HEK293 (cell line): ENCODE measurements at regions of chr12 and their contacts with region 1.

Region 1: GRCh38 chr12:10140001-10140400 is 10.0 kb upstream of the CLEC7A start:
- H3K4me3 ChIP-seq: no peak overlapping the region
- H3K27ac ChIP-seq: no peak overlapping the region
- H3K4me1 ChIP-seq: no peaks in the 10 kb centered on the region
- CTCF ChIP-seq: no peak; the same call in 1 of the 2 replicates

Region 2: DNA sequence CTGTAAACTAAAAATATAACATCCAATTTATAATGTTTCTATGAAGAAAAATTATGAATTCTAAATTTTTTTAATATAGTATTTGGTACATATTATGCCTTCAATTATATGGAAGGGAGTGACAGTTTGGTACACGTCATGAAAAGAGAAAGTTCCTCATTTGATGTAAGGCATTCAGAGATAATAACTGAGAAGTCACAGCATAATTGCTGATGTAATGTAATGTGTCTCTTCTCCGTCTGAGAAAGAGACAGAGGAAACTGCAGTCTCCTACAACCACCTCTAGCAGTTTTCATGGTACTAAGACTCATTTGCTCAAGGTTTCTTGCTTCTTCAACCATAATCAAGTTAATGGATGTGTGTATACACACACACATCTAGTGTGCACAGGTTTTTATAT is 377.0 kb before region 1 on chr12:
- CTCF ChIA-PET with region 1: no interaction called
- POLR2A ChIA-PET with region 1: no interaction called
- H3K4me3 ChIP-seq: no peak overlapping the region
- H3K27ac ChIP-seq: no peak overlapping the region
- H3K4me1 ChIP-seq: no peaks in the 10 kb centered on the region
- CTCF ChIP-seq: no peak

Region 3: DNA sequence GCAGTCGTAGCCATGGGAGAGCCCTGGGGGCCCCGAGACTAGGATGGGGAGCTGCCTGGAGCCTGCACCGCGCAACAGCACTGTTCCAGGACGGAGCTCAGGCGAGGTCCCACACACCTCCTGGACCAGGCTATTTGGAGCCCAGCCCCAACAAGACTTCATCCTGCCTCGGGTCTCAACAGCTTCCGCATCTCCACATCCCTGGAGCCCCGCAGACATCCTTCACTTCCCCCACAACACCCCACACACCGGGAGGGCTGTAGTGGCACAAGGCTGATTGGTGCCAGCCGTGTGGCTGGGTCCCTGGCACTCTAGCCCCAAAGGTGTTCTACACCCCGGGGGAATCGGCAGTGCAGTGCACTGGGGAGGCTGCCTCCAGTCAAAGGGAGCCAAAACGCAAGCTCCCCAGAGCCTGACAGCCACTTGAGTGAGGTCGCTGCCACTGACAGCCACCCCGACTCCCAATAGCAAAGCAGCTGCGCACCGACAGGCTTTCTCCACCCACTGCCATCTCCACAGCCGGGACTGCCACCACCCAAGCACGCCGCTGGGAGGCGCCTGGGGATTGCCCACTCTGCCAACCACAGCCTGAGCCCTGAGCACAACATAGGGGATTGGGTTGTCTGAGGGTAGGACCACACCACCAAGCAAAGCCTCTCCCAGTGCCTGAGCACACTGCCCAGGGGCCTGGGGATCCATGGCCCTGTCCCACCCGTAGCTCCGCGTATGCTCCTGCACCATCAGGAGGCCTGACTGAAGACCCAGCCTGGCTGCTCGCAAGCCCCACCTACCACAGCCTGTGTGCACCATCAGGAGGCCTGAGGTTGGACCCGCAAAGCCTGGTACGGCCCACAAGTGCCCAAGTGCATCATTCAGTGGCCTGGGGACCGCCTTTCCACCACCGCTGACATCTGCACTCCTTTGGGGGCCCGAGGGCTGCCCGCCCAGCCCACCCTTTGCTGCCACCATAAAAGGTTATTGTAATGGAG is 325.9 kb before region 1 on chr12:
- CTCF ChIA-PET with region 1: interaction called, 10 read pairs
- POLR2A ChIA-PET with region 1: no interaction called
- H3K4me3 ChIP-seq: peak overlapping the region; percentile 28
- H3K27ac ChIP-seq: no peak overlapping the region
- H3K4me1 ChIP-seq: no peaks in the 10 kb centered on the region
- CTCF ChIP-seq: peak; percentile 91

Region 4: GRCh38 chr12:10012630-10013330 is 127.2 kb before region 1 on chr12:
- CTCF ChIA-PET with region 1: interaction called, 16 read pairs
- POLR2A ChIA-PET with region 1: no interaction called
- H3K4me3 ChIP-seq: no peak overlapping the region
- H3K27ac ChIP-seq: no peak overlapping the region
- H3K4me1 ChIP-seq: no peaks in the 10 kb centered on the region
- CTCF ChIP-seq: no peak

Region 5: GRCh38 chr12:10033783-10034545 is 106.0 kb before region 1 on chr12:
- CTCF ChIA-PET with region 1: interaction called, 11 read pairs
- POLR2A ChIA-PET with region 1: no interaction called
- H3K4me3 ChIP-seq: no peak overlapping the region
- H3K27ac ChIP-seq: no peak overlapping the region
- H3K4me1 ChIP-seq: no peaks in the 10 kb centered on the region
- CTCF ChIP-seq: no peak

Region 6: DNA sequence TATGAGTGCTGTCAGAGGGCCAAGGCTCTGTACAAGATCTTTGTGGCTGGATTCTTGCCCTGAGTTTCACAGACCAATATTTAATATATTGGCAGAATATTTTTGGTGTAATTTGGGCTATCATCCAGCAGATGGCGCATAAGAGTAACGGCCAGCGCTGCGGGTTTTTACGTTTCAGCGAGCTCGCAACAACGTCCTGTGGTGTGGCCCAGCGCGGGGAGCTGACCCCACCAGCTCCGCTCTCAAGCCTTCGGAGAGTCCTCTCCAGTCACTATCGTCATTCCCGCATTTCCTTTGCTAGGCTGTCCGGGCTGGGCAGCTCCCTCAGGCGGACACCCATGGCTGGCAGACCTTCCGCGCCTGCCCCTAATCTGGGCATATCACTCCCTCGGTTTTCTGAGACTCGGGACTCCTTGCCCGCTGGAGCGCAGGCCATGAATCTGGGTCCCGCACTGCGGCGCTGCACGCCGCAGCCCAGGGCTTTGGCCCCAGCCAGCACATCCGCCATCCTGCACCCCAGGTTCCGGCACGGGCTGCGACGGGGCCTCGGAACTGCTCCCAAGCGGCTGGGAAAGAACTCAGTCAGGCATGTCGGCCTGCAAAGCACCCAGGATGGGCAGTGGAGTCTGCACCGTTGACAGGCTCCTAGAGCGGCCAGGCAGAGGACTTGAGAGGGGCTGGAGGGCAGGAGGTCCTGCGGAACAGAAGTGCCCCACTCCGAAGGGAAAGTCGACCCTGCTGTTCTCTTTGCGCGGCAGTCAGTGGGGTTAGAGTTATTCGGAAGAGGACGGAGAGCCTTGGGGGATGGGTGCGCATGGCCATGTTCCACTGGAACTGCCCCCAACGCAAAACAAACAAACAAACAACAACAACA is 13.5 kb after region 1 on chr12:
- CTCF ChIA-PET with region 1: interaction called, 13 read pairs
- POLR2A ChIA-PET with region 1: no interaction called
- H3K4me3 ChIP-seq: peak overlapping the region; percentile 39
- H3K27ac ChIP-seq: peak overlapping the region; percentile 3; the same call in 1 of the 2 replicates
- H3K4me1 ChIP-seq: no peaks in the 10 kb centered on the region
- CTCF ChIP-seq: peak; percentile 76

Region 7: DNA sequence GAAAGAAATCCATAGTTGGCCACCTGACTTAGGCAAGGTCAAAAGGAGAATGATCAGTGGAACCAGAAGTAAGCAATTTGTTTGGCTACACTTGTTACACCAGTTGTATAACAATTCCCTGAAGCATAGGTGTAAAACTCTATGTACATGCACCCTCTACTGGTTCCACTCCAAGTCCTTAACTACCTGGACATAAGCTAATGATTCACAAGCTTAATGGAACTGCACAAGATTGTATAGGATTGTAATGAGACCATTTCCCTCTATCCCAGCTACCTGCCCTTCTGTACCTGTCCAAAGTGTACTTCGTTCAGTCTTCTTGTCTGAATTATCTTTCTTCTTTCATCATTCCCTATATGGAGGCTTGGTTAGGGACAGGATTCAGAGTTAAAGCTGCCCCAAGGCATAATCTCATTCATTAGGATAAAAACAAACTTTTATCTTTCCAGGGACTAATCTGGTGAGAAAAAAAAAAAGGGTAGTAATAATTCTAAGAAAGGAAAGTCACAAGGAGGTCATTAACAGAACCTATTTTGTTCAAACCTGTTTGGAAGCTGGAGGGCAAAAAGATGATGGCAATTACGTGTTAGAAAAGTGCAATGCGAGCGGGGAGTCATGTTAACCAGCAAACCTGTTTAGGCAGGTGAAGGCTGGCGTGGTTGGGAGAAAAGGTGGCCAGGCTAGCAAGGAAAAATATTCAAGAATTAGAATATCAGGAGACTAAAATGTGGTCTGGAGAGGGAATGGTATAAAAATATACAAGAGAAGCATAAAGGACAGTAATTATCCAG is 36.0 kb after region 1 on chr12:
- CTCF ChIA-PET with region 1: no interaction called
- POLR2A ChIA-PET with region 1: no interaction called
- H3K4me3 ChIP-seq: no peak overlapping the region
- H3K27ac ChIP-seq: no peak overlapping the region
- H3K4me1 ChIP-seq: no peaks in the 10 kb centered on the region
- CTCF ChIP-seq: no peak

Region 8: DNA sequence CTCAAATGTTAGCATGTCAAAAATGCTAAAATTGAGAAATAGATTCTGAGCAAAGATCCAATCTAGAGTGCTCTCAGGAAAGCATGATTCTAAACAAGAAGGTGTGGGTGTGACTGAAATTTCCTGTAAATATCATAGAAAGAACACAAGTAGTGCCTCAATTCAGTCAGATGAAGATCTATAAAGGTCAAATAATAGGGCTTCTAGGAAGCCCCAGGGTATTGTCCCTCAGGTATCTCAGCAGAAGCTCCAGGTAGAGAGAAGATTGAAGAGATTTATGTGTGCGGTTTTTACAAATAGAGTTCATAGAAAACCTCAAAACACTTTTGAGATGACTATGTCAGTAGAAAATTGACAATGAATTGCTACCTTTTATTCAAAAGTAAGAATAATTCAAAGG is 180.6 kb after region 1 on chr12:
- CTCF ChIA-PET with region 1: no interaction called
- POLR2A ChIA-PET with region 1: no interaction called
- H3K4me3 ChIP-seq: no peak overlapping the region
- H3K27ac ChIP-seq: no peak overlapping the region
- H3K4me1 ChIP-seq: no peaks in the 10 kb centered on the region
- CTCF ChIP-seq: no peak